Mammary epithelial cell (primary cell): ENCODE measurements at regions of chr16 and their contacts with region 1.

Region 1: DNA sequence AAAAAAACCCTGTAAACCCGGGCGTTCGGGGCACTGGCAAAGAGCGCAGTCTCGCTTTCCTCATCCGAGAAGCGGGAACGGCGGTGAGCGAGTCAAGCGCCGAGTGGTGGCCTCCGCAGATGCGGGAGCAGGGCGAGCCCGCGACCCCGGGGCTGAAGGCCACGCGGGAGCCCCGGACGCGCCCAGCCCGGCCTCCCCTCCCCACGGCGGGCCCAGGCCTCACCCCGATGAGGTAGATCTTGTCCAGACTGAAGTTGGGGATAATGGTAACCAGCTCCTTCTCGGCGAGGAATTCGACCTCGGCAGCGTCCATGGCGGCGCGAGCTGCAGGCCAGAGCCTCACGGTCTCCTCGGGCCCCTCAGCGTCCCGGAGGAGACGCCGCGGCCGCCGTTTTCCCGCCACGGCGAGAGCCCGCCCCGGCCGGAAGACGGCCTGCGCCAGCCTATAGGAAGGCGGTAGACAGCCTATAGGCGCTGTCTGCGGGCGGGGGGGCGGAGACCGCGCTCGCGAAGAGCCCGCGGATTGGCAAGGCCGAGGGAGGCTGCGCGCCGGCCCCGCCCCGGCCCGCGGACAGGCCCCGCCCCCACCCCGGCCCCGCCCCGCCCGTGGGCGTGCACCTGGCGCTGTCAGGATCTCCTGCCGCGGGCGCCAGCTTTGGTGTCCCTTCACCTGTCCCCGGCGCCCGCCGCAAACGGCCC is at the start of gene GINS2:
- DNase-seq: peak; percentile 85
- H3K4me3 ChIP-seq: peak within 1 kb of the TSS; percentile 62 to 91 (median 72)
- H3K27ac ChIP-seq: peak within 1 kb of the TSS; percentile 44
- H3K4me1 ChIP-seq: peaks cover 7% of the 10 kb centered on the region
- H3K27me3 ChIP-seq: no peaks in the 10 kb centered on the region
- CTCF ChIP-seq: no peak
- total RNA-seq, gene GINS2: 1.5 to 32.5 TPM

Region 2: DNA sequence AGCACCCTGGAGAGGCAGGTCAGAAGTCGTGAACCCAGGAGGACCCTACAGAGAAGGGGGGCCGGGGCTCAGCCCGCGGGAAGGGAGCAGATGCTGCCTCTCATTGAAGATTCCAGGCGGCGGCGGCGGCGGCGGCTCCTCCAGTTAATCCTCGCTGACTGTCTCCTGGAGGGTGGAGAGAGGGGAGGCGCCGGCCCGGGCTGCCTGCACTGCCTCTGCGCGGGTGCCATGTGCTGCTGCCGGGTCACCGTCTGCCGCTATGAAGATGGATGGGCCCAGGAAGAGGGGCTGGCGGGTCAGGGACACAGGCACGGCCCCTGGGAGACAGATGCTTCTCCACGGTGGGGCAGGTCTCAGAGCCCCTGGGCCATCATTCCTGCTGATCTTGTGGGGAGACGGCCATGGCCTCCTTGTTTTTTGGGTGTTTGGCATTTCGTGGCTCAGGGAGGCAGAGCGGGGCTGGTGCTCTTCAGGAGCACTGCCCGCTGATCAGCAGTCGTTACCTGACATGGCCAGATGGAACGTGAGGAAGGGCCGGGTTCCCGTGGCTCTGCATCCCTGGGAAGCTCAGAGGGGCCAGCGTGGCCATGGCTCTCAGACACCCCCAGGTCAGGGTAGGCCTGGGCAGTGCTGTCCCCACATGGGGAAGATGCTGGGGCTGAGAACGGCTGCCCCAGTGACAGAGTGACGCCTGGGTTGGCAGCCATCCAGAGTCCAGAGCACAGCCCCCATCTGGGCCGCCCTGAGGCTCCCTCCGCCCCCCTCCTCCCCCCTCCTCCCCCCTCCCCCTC is 36.1 kb before region 1 on chr16:
- CTCF ChIA-PET with region 1: no interaction called
- dilution Hi-C with region 1: no loop called
- in situ Hi-C with region 1: no loop called
- intact Hi-C with region 1: no loop called
- DNase-seq: no peak
- H3K4me3 ChIP-seq: no peak overlapping the region
- H3K27ac ChIP-seq: no peak overlapping the region
- H3K4me1 ChIP-seq: no peaks in the 10 kb centered on the region
- H3K27me3 ChIP-seq: no peaks in the 10 kb centered on the region
- CTCF ChIP-seq: no peak

Region 3: GRCh38 chr16:85731186-85731585 is 42.5 kb after region 1 on chr16:
- CTCF ChIA-PET with region 1: no interaction called
- dilution Hi-C with region 1: no loop called
- in situ Hi-C with region 1: no loop called
- intact Hi-C with region 1: loop called (anchors 1 kb)
- DNase-seq: no peak
- H3K4me3 ChIP-seq: no peak overlapping the region
- H3K27ac ChIP-seq: no peak overlapping the region
- H3K4me1 ChIP-seq: peaks cover 7% of the 10 kb centered on the region
- H3K27me3 ChIP-seq: no peaks in the 10 kb centered on the region
- CTCF ChIP-seq: no peak